Breast epithelium (tissue), 4 donors: ENCODE measurements at regions of chr2 and their contacts with region 1.

Region 1: DNA sequence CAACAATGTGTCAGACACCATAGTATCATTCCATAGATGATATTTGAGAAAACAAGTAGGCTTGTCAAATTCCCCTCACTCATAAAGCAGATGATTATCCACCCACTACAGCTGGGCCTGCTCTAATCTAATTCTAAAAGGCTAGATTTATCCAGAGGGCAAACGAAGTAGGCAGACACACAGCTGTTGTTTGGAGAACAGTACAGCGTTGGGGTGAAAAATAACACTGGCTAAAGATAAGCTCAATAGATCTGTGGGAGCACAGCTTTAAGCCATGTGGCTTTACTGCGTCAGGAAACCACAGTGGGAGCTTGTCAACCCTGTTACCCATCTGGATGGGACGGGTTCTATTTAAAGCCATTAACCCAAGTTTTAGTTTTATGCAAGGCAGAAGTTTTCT is 48.9 kb upstream of the COBLL1 start:
- DNase-seq: no peak
- H3K4me3 ChIP-seq: no peak overlapping the region
- H3K27ac ChIP-seq: peak overlapping the region in 1 of 2 donors; percentile 35
- H3K4me1 ChIP-seq: no peaks in the 10 kb centered on the region
- H3K27me3 ChIP-seq: no peaks in the 10 kb centered on the region
- CTCF ChIP-seq: no peak
- POLR2A ChIP-seq: no peak

Region 2: DNA sequence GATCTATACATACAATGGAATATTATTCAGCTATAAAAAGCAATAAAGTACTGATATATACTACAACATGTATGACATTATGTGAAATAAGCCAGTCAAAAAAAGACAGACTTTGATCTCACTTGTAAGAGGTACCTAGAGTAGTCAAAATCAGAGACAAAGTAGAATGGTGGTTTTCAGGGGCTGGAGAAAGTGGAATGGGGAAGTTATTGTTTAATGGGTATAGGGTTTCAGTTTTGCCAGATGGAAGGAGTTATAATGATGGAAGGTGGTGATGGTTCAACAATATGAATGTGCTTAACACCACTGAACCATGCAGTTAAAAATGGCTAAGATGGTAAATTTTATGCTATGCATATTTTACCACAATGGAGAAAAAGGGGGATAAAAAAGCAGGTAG is 55.2 kb before region 1 on chr2:
- intact Hi-C with region 1: no loop called
- DNase-seq: no peak
- H3K4me3 ChIP-seq: no peak overlapping the region
- H3K27ac ChIP-seq: no peak overlapping the region
- H3K4me1 ChIP-seq: no peaks in the 10 kb centered on the region
- H3K27me3 ChIP-seq: no peaks in the 10 kb centered on the region
- CTCF ChIP-seq: no peak
- POLR2A ChIP-seq: no peak

Region 3: DNA sequence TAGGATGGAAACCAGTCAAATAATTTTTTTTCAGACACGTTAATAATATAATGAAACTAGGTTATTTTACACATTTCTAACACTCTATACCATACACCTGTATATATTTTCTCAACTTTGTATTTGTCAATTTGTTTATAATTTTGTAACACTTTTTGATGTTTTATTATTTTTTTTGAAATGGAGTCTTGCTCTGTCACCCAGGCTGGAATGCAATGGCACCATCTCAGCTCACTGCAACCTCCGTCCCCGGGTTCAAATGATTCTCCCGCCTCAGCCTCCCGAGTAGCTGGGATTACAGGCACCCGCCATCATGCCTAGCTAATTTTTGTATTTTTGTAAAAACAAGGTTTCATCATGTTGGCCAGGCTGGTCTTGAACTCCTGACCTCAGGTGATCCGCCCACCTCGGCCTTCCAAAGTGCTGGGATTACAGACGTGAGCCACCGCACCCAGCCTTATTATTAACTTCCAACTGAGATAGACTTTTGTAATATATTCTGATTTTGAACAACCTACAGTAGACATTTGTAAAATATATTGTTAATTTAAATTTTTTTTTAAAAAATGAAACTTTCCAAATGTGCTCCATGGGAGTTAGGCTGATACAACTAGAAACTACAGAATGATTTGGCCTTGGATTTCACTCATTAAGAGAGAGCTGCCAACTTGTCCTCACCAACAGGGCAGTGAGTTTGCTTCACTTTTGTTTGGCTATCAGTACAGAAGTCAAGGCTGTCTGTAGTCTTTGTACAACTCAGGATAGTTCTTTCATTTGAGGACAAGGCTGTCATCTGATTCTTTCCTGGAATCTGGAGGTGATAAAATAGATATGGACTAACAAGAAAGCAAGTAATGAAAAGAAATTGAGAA is 15.0 kb before region 1 on chr2:
- intact Hi-C with region 1: loop called (anchors 1 kb)
- DNase-seq: no peak
- H3K4me3 ChIP-seq: no peak overlapping the region
- H3K27ac ChIP-seq: no peak overlapping the region
- H3K4me1 ChIP-seq: no peaks in the 10 kb centered on the region
- H3K27me3 ChIP-seq: no peaks in the 10 kb centered on the region
- CTCF ChIP-seq: no peak
- POLR2A ChIP-seq: no peak

Region 4: DNA sequence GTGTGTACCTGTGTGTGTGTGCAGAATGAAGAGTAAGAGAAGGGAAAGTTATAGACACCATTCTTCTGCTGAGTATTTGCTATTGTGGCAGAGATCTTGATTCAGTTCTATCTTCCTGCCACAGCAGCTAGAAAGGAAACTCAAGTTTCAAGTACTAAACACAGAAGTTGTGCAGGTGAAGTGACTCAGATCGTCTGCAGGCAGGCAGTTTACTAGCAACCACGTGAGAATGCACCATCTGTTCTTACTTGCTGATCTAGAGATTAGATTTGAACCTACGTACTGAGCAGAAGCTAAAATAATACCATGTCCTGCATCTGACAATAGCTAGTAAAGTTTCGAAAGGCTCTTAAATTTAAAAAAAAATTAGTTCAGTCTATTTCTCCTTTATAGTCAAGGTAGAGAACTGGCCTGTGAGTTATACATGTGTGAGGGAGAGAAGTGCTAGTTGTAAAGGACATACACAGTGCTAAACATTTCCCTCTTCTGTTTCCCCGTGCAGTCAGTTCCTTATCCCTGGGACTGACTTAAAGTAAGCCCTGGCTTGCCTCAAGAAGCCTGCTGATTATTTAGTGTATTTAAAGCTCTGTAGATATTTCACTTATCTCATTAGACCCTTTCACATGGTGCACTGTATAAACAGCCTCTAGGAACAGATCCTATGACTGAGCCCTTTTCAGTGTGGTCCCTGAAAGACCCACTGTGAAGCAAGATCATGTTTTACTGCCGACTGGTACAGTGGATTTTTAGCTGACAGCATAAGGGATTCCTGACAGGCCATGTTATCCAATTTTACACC is 19.8 kb after region 1 on chr2:
- intact Hi-C with region 1: no loop called
- DNase-seq: no peak
- H3K4me3 ChIP-seq: no peak overlapping the region
- H3K27ac ChIP-seq: peak overlapping the region in 1 of 2 donors; percentile 6
- H3K4me1 ChIP-seq: no peaks in the 10 kb centered on the region
- H3K27me3 ChIP-seq: no peaks in the 10 kb centered on the region
- CTCF ChIP-seq: no peak
- POLR2A ChIP-seq: no peak

Region 5: DNA sequence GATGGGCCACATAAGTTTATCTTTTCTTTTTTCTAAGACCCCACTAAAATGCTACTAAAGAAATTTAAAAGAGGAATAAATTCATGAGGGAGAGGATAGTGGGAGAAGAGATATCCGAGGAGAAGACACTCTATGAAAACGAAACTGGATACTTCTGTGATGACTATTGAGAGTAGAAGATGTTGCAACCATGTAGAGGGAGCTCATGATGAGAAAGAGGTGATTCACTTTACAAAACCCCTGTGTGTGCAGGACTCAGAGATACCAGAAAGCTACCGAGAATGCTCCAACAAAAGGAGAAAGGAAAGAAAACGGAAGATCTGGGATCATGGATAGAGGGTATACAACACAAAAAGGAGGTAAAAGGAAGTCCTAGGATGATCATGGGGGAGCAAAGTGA is 29.9 kb after region 1 on chr2:
- intact Hi-C with region 1: no loop called
- DNase-seq: no peak
- H3K4me3 ChIP-seq: no peak overlapping the region
- H3K27ac ChIP-seq: no peak overlapping the region
- H3K4me1 ChIP-seq: no peaks in the 10 kb centered on the region
- H3K27me3 ChIP-seq: no peaks in the 10 kb centered on the region
- CTCF ChIP-seq: no peak
- POLR2A ChIP-seq: no peak

Region 6: DNA sequence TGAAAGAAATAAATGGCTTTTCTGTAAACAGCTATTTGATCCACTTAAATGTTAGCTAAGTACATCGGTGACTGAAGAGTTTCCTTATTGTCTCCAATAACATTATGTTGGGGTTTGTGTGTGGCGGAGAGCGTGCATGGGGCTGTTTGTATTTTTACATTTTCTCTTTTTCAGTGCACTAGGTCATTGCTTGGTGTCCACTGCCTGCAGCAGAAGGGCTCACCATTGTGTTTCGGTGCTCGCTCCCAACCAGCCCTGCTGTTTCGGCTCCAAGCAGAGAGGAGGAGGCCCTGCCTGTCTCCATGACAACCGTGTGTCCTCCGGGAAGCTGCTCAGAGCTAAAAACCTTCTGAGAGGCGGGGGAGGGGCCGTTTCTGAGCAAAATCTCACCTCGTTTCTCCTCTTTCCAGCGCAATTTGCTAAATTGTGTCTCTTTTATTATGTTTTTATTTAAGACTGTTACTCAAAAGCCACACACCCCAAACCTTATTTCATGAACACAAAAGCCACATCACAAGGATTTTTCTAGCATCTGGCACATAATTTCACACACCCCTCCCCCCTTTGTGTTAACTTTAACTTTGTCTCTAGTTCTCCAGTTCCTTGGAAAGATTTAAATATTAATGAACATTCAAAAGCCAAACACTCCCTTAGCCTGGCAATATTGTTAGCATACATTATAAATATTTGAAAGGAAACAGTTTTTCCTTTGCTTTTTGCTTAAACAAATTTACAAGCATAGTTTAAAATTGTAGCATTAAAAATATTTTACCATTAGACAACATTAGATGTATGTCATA is 177.6 kb after region 1 on chr2:
- intact Hi-C with region 1: no loop called
- DNase-seq: no peak
- H3K4me3 ChIP-seq: no peak overlapping the region
- H3K27ac ChIP-seq: no peak overlapping the region
- H3K4me1 ChIP-seq: no peaks in the 10 kb centered on the region
- H3K27me3 ChIP-seq: no peaks in the 10 kb centered on the region
- CTCF ChIP-seq: no peak
- POLR2A ChIP-seq: no peak